Activated T-helper 1 cell treated with anti-CD3 and anti-CD28 coated beads, Interleukin-12 subunit alpha, Interleukin-12 subunit beta, Interleukin-2, Interleukin-4 antibody, amounts not matched to agents 30 ng/mL and 10 ng/mL and 1 ng/mL, durations not matched to agents 14 hours and 24 hours and 36 hours (primary cell): ENCODE measurements at regions of chr16 and their contacts with region 1.

Region 1: GRCh38 chr16:88527186-88527936 is 42.8 kb upstream of the ZC3H18 start:
- DNase-seq: peak; percentile 37
- H3K4me3 Mint-ChIP-seq: no peak overlapping the region
- H3K27ac Mint-ChIP-seq: no peak overlapping the region
- H3K4me1 Mint-ChIP-seq: no peaks in the 10 kb centered on the region
- H3K27me3 Mint-ChIP-seq: no peaks in the 10 kb centered on the region

Region 2: GRCh38 chr16:88561485-88562369 is 34.4 kb after region 1 on chr16:
- intact Hi-C with region 1: loop called (anchors 5 kb)
- DNase-seq: peak; percentile 25
- H3K4me3 Mint-ChIP-seq: no peak overlapping the region
- H3K27ac Mint-ChIP-seq: no peak overlapping the region
- H3K4me1 Mint-ChIP-seq: peaks cover 16% of the 10 kb centered on the region
- H3K27me3 Mint-ChIP-seq: peaks cover 2% of the 10 kb centered on the region

Region 3: DNA sequence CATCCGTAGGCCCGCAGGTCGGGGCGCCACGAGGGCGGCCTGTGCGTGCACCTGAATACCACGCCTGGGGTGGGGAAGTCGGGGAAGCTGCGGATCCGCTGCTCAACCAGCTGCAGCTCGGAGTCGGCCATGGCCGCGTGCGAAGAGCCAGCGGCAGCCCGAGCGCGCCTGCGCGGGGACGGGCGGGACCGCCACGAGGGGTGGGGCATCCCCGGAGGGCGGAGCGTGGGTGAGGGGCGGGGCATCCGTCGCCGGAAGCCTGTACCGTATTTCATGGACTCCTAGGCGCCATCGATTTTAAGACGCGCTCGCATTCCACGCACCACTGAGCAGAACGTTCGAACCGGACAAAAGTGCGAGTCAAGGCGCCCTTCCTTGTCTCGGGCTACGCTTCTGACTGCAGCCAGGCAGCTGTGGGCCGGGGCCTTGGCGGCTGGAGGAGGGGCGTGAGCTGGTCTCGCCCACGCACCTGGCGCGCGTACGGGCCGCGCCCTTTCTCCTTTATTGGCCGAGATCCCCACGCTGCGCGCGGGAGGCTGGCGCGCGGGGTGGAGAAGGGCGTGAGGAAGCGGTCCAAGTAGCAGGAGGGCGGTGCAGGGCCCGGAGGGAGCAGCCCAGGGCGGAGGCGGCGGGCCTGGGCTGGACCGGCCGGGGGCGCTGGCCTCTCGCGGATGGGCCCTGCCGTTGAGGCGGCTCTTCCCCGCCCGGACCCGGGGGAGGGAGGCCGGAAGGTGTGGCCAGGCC is 284.6 kb after region 1 on chr16 and contains the start of gene APRT:
- intact Hi-C with region 1: no loop called
- DNase-seq: peak; percentile 97
- H3K4me3 Mint-ChIP-seq: peak within 1 kb of the TSS; percentile 90
- H3K27ac Mint-ChIP-seq: peak within 1 kb of the TSS; percentile 98
- H3K4me1 Mint-ChIP-seq: peaks cover 11% of the 10 kb centered on the region
- H3K27me3 Mint-ChIP-seq: no peaks in the 10 kb centered on the region
- total RNA-seq, gene APRT: 301 and 303 TPM in 2 replicates